ENCODE measurements at regions of chr15 and their contacts with region 1.

Region 1: GRCh38 chr15:81160312-81161159 is 26.5 kb downstream of the CFAP161 start:
- DNase-seq: no peak
- ATAC-seq: peak in 1 of 4 donors; percentile 9
- H3K4me3 ChIP-seq: no peak overlapping the region
- H3K27ac ChIP-seq: no peak overlapping the region
- H3K4me1 ChIP-seq: no peaks in the 10 kb centered on the region
- H3K27me3 ChIP-seq: no peaks in the 10 kb centered on the region
- CTCF ChIP-seq: no peak
- POLR2A ChIP-seq: no peak

Region 2: GRCh38 chr15:81029414-81030300 is 130.9 kb before region 1 on chr15:
- intact Hi-C with region 1: no loop called
- DNase-seq: no peak
- ATAC-seq: peak in 1 of 4 donors; percentile 11
- H3K4me3 ChIP-seq: no peak overlapping the region
- H3K27ac ChIP-seq: no peak overlapping the region
- H3K4me1 ChIP-seq: peaks cover 2 to 28% (median 12%) of the 10 kb centered on the region in 4 donors
- H3K27me3 ChIP-seq: no peaks in the 10 kb centered on the region
- CTCF ChIP-seq: no peak
- POLR2A ChIP-seq: no peak

Region 3: DNA sequence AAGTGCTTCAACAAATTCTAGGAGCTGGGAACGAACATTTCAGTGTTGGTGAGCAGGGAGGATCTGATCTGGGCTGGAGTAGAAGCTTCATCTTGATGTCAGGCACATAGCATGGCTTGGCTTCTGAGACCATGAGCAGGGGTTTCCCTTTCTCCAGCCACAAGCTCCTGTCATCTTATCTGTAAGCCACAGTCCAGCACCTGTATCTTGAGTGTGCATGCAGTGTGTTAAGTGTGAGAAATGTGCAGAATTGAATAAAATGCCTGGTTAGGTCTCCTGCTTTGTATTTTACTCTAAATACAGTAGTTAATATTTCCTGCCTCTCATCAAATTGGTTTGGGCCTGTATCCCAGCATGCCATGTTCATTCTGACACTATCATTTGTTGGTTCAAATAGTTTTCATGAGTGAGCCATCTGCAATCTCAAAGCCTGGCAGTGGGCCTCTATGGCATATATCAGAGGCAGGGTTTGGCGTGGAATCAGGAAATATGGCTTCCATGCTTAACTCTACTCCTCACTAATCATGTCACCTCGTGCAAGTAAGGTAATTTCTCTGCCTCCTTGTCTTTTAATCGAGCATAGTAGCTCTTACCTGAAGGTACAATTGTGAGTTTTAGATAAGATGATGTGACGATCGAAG is 116.5 kb before region 1 on chr15:
- intact Hi-C with region 1: no loop called
- DNase-seq: no peak
- ATAC-seq: no peak
- H3K4me3 ChIP-seq: no peak overlapping the region
- H3K27ac ChIP-seq: no peak overlapping the region
- H3K4me1 ChIP-seq: peaks cover 0 to 22% (median 5%) of the 10 kb centered on the region in 4 donors
- H3K27me3 ChIP-seq: no peaks in the 10 kb centered on the region
- CTCF ChIP-seq: no peak
- POLR2A ChIP-seq: no peak

Region 4: DNA sequence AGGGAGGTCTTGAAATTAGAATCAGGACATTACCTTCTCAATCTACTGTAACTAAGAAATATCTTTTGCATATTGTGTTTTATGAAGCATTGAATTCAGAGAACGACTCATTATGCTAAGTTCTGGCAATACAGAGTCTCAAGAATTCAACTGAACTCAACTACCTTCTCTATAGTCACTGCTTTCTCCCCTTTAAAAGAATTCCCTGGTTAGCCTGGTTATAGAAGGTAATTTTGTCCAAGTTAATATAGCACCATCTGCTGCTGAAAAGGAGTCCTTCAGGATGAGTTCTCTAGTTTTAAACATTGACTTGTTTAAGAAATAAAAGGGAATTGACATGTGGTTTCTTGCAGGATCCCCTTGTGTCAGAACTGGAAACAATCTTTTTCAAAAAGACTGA is 96.4 kb after region 1 on chr15:
- intact Hi-C with region 1: loop called in 1 of 2 experiments (anchors 10 kb)
- DNase-seq: no peak
- ATAC-seq: peak; percentile 29 to 57 (median 49)
- H3K4me3 ChIP-seq: no peak overlapping the region
- H3K27ac ChIP-seq: no peak overlapping the region
- H3K4me1 ChIP-seq: no peaks in the 10 kb centered on the region
- H3K27me3 ChIP-seq: no peaks in the 10 kb centered on the region
- CTCF ChIP-seq: peak; percentile 35 to 52 (median 42)
- POLR2A ChIP-seq: no peak

Measured in right lobe of liver (tissue), 6 donors.